ENCODE measurements at regions of chr18 and their contacts with region 1.

Region 1: GRCh38 chr18:37385846-37386778 is 179.5 kb downstream of the CELF4 start:
- DNase-seq: no peak
- H3K4me3 ChIP-seq: no peak overlapping the region
- H3K27ac ChIP-seq: no peak overlapping the region
- H3K27me3 ChIP-seq: peaks cover 20% of the 10 kb centered on the region
- CTCF ChIP-seq: peak; percentile 70

Region 2: GRCh38 chr18:37476182-37476581 is 90.1 kb after region 1 on chr18:
- CTCF ChIA-PET with region 1: interaction called, 17 read pairs
- POLR2A ChIA-PET with region 1: no interaction called
- DNase-seq: no peak
- H3K4me3 ChIP-seq: no peak overlapping the region
- H3K27ac ChIP-seq: no peak overlapping the region
- H3K27me3 ChIP-seq: peaks cover 8% of the 10 kb centered on the region
- CTCF ChIP-seq: peak; percentile 68

Region 3: DNA sequence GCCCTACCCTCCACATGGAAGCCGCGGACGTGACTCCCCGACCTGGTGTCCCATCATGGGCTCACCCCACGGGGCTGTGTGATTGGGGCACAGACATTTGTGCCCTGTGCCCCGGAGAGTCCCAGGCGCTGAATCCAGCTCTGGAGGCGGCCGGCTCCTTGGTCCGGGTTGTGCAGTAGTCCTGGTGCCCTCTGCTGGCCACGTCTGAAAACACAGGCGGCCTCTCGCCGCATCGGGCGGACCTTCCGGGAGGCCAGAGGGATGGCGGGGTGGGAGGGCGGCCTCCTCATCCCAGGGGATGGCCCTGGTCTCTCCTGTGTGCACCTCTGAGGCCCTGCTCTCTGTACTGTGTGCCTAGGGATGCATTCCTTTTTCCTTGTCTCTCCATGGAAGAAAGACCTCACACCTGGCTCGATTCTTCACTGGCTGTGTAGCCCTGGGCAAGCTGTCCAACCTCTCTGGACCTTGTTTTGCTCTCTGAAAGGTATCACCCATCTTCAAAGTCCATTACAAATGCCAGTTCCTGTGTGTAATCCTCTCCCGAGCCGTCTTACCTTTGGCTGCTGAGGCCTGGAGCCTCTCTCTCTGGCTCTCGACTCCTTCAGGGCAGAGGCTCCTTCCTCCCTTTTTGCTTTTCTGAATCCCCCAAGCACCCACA is 151.9 kb after region 1 on chr18:
- CTCF ChIA-PET with region 1: interaction called, 26 read pairs
- POLR2A ChIA-PET with region 1: no interaction called
- DNase-seq: peak; percentile 13
- H3K4me3 ChIP-seq: no peak overlapping the region
- H3K27ac ChIP-seq: no peak overlapping the region
- H3K27me3 ChIP-seq: peaks cover 25% of the 10 kb centered on the region
- CTCF ChIP-seq: peak; percentile 82

Measured in AG04450 (cell line).